CD8-positive, alpha-beta T cell (primary cell): ENCODE measurements at regions of chrX and their contacts with region 1.

Region 1: GRCh38 chrX:23782863-23783568 is at the start of gene SAT1:
- DNase-seq: peak; percentile 86 to 96 (median 92)
- ATAC-seq: peak; percentile 88
- H3K4me3 ChIP-seq: peak within 1 kb of the TSS; percentile 91 to 94
- H3K4me3 Mint-ChIP-seq: peak within 1 kb of the TSS; percentile 97
- H3K27ac ChIP-seq: peak within 1 kb of the TSS; percentile 92 to 96
- H3K27ac Mint-ChIP-seq: peak within 1 kb of the TSS; percentile 99
- H3K4me1 ChIP-seq: peaks cover 25% of the 10 kb centered on the region
- H3K4me1 Mint-ChIP-seq: peaks cover 35% of the 10 kb centered on the region
- H3K27me3 ChIP-seq: no peaks in the 10 kb centered on the region
- H3K27me3 Mint-ChIP-seq: no peaks in the 10 kb centered on the region
- CTCF ChIP-seq: peak; percentile 60
- total RNA-seq, gene SAT1: 270 to 285 TPM

Region 2: GRCh38 chrX:23699636-23700194 is 83.3 kb before region 1 on chrX:
- CTCF ChIA-PET with region 1: interaction called, 4 read pairs
- POLR2A ChIA-PET with region 1: no interaction called
- intact Hi-C with region 1: loop called in 1 of 2 experiments (anchors 10 kb)
- DNase-seq: peak in 6 of 9 experiments; percentile 11 to 62 (median 24)
- ATAC-seq: peak; percentile 65
- H3K4me3 ChIP-seq: no peak overlapping the region
- H3K4me3 Mint-ChIP-seq: peak overlapping the region; percentile 78
- H3K27ac ChIP-seq: no peak overlapping the region
- H3K27ac Mint-ChIP-seq: peak overlapping the region; percentile 50
- H3K4me1 ChIP-seq: no peaks in the 10 kb centered on the region
- H3K4me1 Mint-ChIP-seq: peaks cover 8% of the 10 kb centered on the region
- H3K27me3 ChIP-seq: no peaks in the 10 kb centered on the region
- H3K27me3 Mint-ChIP-seq: no peaks in the 10 kb centered on the region
- CTCF ChIP-seq: no peak

Region 3: GRCh38 chrX:23756157-23756559 is 26.9 kb before region 1 on chrX:
- CTCF ChIA-PET with region 1: interaction called, 4 read pairs
- POLR2A ChIA-PET with region 1: no interaction called
- intact Hi-C with region 1: loop called in 1 of 2 experiments (anchors 1 kb)
- DNase-seq: peak; percentile 27 to 79 (median 62)
- ATAC-seq: no peak
- H3K4me3 ChIP-seq: no peak overlapping the region
- H3K4me3 Mint-ChIP-seq: no peak overlapping the region
- H3K27ac ChIP-seq: no peak overlapping the region
- H3K27ac Mint-ChIP-seq: no peak overlapping the region
- H3K4me1 ChIP-seq: no peaks in the 10 kb centered on the region
- H3K4me1 Mint-ChIP-seq: peaks cover 3% of the 10 kb centered on the region
- H3K27me3 ChIP-seq: no peaks in the 10 kb centered on the region
- H3K27me3 Mint-ChIP-seq: no peaks in the 10 kb centered on the region
- CTCF ChIP-seq: peak; percentile 37

Region 4: GRCh38 chrX:24024819-24025740 is 242.1 kb after region 1 on chrX:
- CTCF ChIA-PET with region 1: interaction called, 3 read pairs
- POLR2A ChIA-PET with region 1: interaction called, 3 read pairs
- intact Hi-C with region 1: loop called in 1 of 2 experiments (anchors 10 kb)
- DNase-seq: peak; percentile 62 to 89 (median 75)
- ATAC-seq: peak; percentile 90
- H3K4me3 ChIP-seq: peak overlapping the region; percentile 67 to 82
- H3K4me3 Mint-ChIP-seq: peak overlapping the region; percentile 87
- H3K27ac ChIP-seq: peak overlapping the region; percentile 85 to 87
- H3K27ac Mint-ChIP-seq: peak overlapping the region; percentile 64
- H3K4me1 ChIP-seq: peaks cover 13% of the 10 kb centered on the region
- H3K4me1 Mint-ChIP-seq: peaks cover 24% of the 10 kb centered on the region
- H3K27me3 ChIP-seq: no peaks in the 10 kb centered on the region
- H3K27me3 Mint-ChIP-seq: no peaks in the 10 kb centered on the region
- CTCF ChIP-seq: no peak

Region 5: GRCh38 chrX:24150051-24150790 is 367.2 kb after region 1 on chrX:
- CTCF ChIA-PET with region 1: no interaction called
- POLR2A ChIA-PET with region 1: no interaction called
- intact Hi-C with region 1: loop called (anchors 2 to 5 kb)
- DNase-seq: peak; percentile 61 to 93 (median 83)
- ATAC-seq: peak; percentile 72
- H3K4me3 ChIP-seq: peak overlapping the region; percentile 66 to 75
- H3K4me3 Mint-ChIP-seq: peak overlapping the region; percentile 83
- H3K27ac ChIP-seq: peak overlapping the region; percentile 88
- H3K27ac Mint-ChIP-seq: peak overlapping the region; percentile 93
- H3K4me1 ChIP-seq: peaks cover 32% of the 10 kb centered on the region
- H3K4me1 Mint-ChIP-seq: peaks cover 59% of the 10 kb centered on the region
- H3K27me3 ChIP-seq: no peaks in the 10 kb centered on the region
- H3K27me3 Mint-ChIP-seq: no peaks in the 10 kb centered on the region
- CTCF ChIP-seq: peak; percentile 15